ENCODE measurements at regions of chr6 and their contacts with region 1.

Region 1: DNA sequence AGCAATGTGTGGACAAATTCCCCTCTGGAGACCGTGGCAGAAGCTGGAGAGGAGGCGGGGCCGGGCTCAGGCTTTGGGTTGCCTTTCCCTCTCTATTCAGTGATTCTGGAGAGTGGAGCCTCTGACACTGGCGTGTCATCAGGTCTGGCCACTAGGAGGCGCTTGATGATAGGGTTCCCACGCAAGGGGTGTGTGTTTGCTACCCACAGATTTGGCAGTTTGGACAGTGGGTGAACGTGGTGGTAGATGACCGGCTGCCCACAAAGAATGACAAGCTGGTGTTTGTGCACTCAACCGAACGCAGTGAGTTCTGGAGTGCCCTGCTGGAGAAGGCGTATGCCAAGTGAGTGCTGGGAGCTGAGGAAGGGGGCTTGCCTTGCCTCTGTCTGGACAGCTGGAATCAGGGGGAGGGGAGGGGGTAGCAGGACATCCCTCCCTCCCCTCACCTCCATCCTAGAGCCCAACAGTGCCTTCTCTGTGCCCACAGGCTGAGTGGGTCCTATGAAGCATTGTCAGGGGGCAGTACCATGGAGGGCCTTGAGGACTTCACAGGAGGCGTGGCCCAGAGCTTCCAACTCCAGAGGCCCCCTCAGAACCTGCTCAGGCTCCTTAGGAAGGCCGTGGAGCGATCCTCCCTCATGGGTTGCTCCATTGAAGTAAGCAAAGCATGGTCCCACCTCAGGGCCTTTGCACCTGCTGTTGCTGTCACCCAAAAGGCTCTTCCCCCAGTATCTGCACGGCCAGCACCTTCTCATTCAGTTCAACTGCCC is 14.3 kb downstream of the CAPN11 start:
- DNase-seq: peak; percentile 62
- H3K4me3 Mint-ChIP-seq: no peak overlapping the region
- H3K27ac Mint-ChIP-seq: peak overlapping the region; percentile 9
- H3K4me1 Mint-ChIP-seq: peaks cover 18% of the 10 kb centered on the region
- H3K27me3 Mint-ChIP-seq: peaks cover 3% of the 10 kb centered on the region

Region 2: DNA sequence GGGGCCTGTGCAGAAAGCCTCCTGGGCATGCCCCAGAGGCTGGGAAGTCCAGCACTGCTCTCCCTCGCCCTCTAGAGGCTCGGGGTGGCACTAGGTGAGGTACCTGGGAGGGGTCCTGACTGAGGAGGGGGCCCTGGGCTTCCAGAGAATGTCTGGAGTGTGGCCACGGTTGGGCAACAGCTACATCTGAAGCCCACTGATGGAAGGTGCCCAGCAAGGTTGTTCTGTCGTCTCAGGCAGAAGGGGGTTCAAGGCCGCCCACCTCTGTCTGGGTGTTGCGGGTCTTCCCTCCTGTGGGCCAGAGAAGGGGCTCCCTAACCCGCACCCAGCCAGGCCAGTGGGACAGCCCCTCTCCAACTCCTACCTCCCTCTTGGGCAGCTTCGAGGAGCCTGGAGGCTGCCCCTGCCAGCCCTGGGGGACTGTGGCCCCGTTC is 414.3 kb before region 1 on chr6:
- intact Hi-C with region 1: no loop called
- DNase-seq: no peak
- H3K4me3 Mint-ChIP-seq: no peak overlapping the region
- H3K27ac Mint-ChIP-seq: no peak overlapping the region
- H3K4me1 Mint-ChIP-seq: peaks cover 3% of the 10 kb centered on the region
- H3K27me3 Mint-ChIP-seq: peaks cover 5% of the 10 kb centered on the region

Region 3: DNA sequence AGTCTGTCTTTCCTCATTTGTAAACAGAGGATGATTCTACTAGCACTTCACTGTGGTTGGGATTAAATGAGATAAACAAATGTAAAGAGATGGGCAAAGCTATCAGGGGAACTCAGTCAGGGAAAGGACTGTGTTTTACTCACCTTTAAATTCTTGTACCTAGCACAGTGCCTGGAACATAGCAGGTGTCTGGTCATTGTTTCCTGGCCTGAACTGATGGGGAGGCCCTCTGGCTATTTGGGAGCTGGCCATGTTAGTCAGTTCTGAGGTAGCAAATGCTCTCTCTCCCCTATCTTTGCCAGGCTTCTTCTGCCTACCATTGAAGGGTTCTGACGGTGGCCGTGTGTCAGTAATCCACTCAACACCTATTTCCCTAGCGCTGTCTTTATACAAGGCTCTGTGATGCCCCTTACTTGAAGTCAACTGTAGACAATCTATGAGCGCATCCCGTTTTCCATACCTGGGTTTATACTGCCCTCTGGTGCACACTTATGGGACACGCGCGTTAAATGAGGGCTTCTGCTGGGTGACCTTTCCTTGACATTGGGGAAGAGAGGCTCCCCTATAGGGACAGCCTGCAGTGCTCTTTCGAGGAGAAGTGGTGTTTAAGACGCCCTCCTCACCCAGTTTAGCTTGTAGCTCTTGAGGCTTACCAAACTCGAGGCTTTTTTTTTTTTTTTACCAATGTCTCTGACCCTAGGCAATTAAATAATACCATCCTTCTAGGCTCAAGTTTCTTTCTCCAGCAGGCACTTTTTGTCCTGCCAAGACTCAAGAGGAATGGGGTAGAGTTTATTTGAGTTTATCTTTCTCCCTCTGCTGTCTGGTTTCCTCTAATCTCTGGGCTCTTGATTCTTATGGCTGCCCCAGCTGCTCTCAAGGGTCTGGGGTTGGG is 165.6 kb after region 1 on chr6:
- intact Hi-C with region 1: loop called (anchors 2 kb)
- DNase-seq: peak; percentile 59
- H3K4me3 Mint-ChIP-seq: no peak overlapping the region
- H3K27ac Mint-ChIP-seq: no peak overlapping the region
- H3K4me1 Mint-ChIP-seq: peaks cover 4% of the 10 kb centered on the region
- H3K27me3 Mint-ChIP-seq: peaks cover 24% of the 10 kb centered on the region

Measured in activated T-helper 2 cell treated with anti-CD3 and anti-CD28 coated beads, Interferon-gamma antibody, Interleukin-2, Interleukin-4, amounts not matched to agents 10 μg/mL and 5 μg/mL and 100 μg/mL, durations not matched to agents 14 hours and 24 hours and 36 hours (primary cell).